ENCODE measurements at regions of chr6 and their contacts with region 1.

Region 1: DNA sequence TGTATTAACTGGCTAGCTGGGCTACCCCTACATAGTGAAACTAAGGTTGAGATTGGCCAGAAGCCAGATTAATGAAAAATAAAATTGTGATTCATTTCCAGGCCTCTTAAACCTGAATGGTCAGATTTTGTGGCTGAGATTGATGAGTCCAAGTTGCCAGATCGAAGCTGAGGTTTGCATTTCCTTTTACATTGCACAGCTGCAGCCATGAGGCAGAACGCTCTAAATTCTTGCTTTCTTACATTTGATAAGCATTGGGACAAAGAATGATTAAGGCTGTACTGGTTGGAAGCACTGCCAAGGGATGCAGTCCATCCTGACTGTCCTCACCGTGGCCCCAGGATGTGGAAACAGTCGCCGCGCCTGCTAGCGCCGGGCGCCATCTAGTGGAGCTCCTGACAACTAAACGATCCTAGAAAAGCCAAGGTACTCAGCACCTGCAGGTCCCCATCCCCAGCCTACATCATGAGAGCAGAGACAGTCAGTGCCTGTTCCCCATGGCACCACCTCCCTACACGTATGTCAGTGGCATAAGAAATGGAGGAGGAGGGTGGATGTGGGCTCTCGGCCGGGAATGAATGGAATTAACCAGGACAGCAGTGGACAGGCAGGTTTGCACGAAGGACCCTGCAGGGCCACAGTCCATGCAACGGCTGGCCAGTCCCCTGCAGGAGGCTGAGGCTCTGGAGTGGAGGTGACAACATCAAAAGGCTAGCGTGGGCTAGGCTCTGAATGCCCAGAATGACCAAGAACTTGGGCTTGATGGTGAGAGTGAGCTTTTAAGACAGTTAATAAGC is 19.0 kb downstream of the PXDC1 start:
- DNase-seq: peak; percentile 76
- H3K4me3 ChIP-seq: no peak overlapping the region
- H3K27ac ChIP-seq: peak overlapping the region; percentile 57
- H3K27me3 ChIP-seq: no peaks in the 10 kb centered on the region
- CTCF ChIP-seq: peak; percentile 93

Region 2: GRCh38 chr6:3410385-3411360 is 321.9 kb before region 1 on chr6:
- CTCF ChIA-PET with region 1: interaction called, 18 read pairs
- POLR2A ChIA-PET with region 1: no interaction called
- DNase-seq: peak; percentile 6
- H3K4me3 ChIP-seq: no peak overlapping the region
- H3K27ac ChIP-seq: no peak overlapping the region
- H3K27me3 ChIP-seq: peaks cover 36% of the 10 kb centered on the region
- CTCF ChIP-seq: peak; percentile 76

Measured in AG04450 (cell line).